ENCODE measurements at regions of chr4 and their contacts with region 1.

Region 1: DNA sequence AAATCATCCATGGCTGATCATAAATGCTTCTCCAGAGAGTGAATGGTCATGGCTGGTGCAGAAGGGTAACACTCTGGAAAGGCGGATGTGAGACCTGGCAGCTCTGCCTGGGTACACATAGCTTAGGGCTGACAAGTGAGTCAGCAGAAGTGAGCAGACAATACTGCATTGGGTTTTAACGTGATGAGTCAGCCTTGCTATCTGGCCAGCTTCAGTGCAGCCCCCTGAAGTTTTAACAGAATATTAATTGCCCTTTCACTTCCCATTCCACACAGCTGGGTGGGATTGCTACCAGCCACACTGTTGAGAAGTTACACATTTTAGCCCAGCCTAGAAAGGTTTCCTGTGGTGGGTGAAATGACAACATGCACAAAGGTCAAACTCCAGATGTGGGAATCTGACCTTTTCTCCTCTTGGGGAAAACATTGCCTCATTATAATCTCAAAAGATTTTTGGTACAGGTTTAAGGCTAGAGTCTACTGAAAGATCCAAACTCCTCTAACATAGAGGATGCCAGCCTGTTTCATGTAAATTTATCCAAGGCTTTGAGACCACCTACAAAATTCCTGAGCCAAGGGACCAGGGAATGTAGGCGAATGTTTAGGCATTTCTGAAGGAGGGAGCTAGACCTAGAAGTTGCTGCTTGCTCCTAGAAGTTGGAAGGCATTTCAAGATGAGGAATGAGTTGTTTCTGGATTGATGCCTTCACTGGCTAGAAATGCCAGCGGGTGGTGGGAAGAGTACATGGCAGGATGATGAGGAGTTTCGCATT is 230.3 kb upstream of the PGRMC2 start:
- DNase-seq: peak; percentile 8
- H3K4me3 Mint-ChIP-seq: no peak overlapping the region
- H3K27ac Mint-ChIP-seq: no peak overlapping the region
- H3K4me1 Mint-ChIP-seq: peaks cover 12% of the 10 kb centered on the region
- H3K27me3 Mint-ChIP-seq: peaks cover 2% of the 10 kb centered on the region

Region 2: DNA sequence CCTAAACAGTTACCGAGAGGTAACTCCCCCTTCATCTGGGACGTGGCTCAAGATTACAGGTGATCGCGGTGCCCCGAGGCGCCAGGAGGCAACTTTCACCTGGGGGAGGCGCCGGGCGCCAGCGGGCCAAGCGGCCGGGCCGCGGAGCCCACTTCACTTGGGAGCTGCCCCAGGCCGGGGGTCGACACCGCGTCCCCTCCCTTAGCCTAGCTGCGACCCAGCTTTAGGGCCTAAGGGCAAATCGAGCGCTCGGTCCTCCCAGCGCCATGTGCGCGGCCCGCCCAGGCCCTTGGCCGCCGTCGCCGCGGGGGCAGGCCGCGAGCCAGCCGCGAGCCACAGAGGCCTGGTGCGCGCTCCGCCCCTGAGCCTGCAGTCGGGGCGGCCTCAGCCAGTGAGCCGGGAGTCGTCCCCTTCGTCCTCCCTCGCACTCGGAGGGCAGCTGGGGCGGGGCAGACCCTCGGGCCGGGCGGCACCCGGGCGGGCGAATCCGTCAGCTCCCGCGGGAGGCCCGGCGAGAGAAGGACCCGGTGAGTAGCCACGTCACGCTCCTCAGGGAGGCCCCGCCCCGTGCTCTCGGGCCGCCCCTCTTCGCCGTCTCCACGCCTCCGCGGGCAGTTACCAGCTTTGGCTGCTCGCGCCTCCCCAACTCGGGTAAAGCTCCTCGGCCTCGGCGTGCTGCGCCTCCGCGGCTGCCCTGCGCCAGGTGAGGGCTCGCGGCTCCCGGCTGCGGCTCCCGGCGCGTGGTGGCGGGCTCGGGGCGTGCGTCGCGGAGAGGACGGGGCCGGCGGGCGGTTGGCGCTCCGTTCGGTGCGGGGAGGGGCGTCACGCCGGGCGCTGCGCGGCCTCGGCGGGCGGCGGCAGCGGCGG is 457.0 kb before region 1 on chr4 and contains the start of gene LARP1B:
- CTCF ChIA-PET with region 1: no interaction called
- intact Hi-C with region 1: loop called (anchors 10 kb)
- DNase-seq: peak; percentile 94
- H3K4me3 Mint-ChIP-seq: peak within 1 kb of the TSS; percentile 82
- H3K27ac Mint-ChIP-seq: peak within 1 kb of the TSS; percentile 81
- H3K4me1 Mint-ChIP-seq: peaks cover 16% of the 10 kb centered on the region
- H3K27me3 Mint-ChIP-seq: no peaks in the 10 kb centered on the region
- total RNA-seq, gene LARP1B: 17.6 to 18.9 TPM

Region 3: GRCh38 chr4:128440923-128441322 is 77.0 kb before region 1 on chr4:
- CTCF ChIA-PET with region 1: no interaction called
- intact Hi-C with region 1: no loop called
- DNase-seq: no peak
- H3K4me3 Mint-ChIP-seq: no peak overlapping the region
- H3K27ac Mint-ChIP-seq: no peak overlapping the region
- H3K4me1 Mint-ChIP-seq: no peaks in the 10 kb centered on the region
- H3K27me3 Mint-ChIP-seq: no peaks in the 10 kb centered on the region

Region 4: DNA sequence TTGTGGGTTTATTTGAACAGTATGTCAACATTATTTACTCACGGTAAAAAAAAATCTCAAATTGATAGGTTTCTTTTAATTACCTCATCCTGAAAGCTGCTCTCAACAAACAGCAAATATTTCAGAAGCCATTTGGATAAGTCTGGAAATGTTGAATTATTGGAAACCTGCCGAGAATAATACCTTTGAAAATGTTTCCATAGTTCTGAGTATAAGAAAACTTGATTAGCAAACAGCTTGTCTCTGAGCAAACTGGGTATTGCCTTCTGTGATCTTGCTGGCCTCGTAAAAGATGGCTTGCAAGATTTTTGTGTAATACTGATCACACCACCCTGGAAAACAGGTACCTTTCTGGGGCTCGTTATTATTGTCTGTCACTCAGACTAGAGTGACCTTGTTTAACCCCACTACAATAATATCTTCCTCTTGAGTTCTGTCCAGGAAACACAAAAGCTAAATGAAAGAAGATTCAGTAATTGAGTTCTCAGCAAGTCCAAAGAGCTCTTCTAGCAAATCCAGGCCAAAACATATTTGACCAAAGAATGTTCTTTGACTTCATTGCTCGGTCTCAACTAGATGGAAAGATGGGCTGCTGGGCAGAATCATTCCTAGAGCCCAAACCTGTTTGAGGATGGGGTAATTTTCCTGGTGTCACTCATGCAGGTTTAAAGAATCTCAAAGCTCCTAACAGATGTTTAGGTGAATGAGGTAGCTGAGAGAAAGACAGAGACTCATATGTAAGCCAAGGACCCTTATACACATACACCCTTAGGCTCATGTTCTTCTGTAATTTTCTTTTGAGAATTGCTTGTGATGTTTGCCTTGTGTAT is 36.0 kb after region 1 on chr4:
- CTCF ChIA-PET with region 1: no interaction called
- intact Hi-C with region 1: loop called (anchors 1 kb)
- DNase-seq: no peak
- H3K4me3 Mint-ChIP-seq: peak overlapping the region; percentile 73
- H3K27ac Mint-ChIP-seq: no peak overlapping the region
- H3K4me1 Mint-ChIP-seq: peaks cover 13% of the 10 kb centered on the region
- H3K27me3 Mint-ChIP-seq: peaks cover 7% of the 10 kb centered on the region

Region 5: GRCh38 chr4:128737098-128737513 is 219.2 kb after region 1 on chr4:
- CTCF ChIA-PET with region 1: no interaction called
- intact Hi-C with region 1: no loop called
- DNase-seq: no peak
- H3K4me3 Mint-ChIP-seq: no peak overlapping the region
- H3K27ac Mint-ChIP-seq: no peak overlapping the region
- H3K4me1 Mint-ChIP-seq: no peaks in the 10 kb centered on the region
- H3K27me3 Mint-ChIP-seq: no peaks in the 10 kb centered on the region